Lower leg skin (tissue), 4 donors: ENCODE measurements at regions of chr1 and their contacts with region 1.

Region 1: DNA sequence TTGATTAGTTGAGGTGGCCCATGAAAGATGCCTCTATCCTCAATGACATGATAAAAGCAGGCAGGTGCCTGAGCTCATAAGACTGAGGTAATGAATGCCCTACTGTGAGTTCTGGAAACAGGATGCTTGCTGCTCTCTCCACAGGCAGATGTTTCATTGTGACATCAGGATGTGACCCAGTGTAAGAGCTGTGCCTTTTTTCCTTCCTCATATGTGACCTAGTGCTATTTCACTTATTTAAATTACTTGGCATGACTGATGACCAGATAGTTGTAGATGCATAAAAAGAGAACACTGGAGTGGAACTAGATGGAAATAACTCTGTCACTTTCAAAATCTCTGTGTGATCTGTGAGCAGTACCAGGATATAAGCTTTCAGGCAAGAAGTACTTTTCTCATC is 31.9 kb downstream of the KIF14 start:
- DNase-seq: no peak
- H3K4me3 ChIP-seq: no peak overlapping the region
- CTCF ChIP-seq: no peak
- POLR2A ChIP-seq: no peak

Region 2: DNA sequence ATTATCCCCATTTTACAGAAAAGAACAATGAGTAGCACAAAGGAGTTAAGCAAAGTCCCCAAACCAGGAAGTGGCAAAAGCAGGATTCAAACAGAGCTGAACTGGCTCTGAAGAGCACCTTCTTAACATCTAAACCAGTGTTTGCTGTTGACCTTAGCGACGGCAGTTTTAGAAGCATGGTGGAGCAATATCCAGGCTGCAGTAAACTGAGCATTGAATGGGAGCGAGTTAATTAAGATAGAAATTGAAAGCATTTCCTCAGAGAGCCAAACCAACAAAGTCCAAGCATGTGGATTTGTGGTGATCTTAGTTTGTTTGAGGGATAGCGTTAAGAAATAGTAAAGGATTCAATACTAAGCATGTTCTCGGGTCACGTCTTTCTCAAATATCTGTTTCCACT is 165.5 kb before region 1 on chr1:
- intact Hi-C with region 1: loop called (anchors 5 kb)
- DNase-seq: no peak
- H3K4me3 ChIP-seq: no peak overlapping the region
- CTCF ChIP-seq: no peak
- POLR2A ChIP-seq: no peak

Region 3: DNA sequence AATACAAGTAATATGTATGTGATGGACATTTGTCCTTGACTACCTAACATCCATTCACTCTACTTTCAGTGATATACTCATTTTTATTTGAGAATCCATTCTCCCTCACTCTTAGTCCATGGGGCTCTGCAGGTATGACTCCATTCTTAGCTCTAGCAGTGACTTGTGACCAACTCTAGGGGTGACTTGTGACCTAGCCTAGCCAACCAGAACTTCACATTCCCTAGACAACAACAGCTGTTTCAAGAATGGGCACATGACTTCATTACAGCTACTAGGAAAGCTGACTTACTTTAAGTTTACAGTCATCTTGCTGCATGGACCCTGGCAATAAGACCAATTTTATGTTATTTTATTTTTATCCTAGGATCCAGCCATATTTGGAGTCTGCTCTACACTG is 104.6 kb after region 1 on chr1:
- intact Hi-C with region 1: no loop called
- DNase-seq: no peak
- H3K4me3 ChIP-seq: no peak overlapping the region
- CTCF ChIP-seq: no peak
- POLR2A ChIP-seq: no peak